ENCODE measurements at regions of chr19 and their contacts with region 1.

Region 1: GRCh38 chr19:18152444-18152816 is 533 bp upstream of the PIK3R2 start:
- DNase-seq: peak; percentile 100
- ATAC-seq: peak; percentile 79
- H3K4me3 Mint-ChIP-seq: peak overlapping the region; percentile 84
- H3K27ac Mint-ChIP-seq: peak overlapping the region; percentile 98
- H3K4me1 Mint-ChIP-seq: peaks cover 23% of the 10 kb centered on the region
- H3K27me3 Mint-ChIP-seq: no peaks in the 10 kb centered on the region

Region 2: GRCh38 chr19:17511724-17512573 is 640.5 kb before region 1 on chr19:
- CTCF ChIA-PET with region 1: no interaction called
- POLR2A ChIA-PET with region 1: no interaction called
- intact Hi-C with region 1: loop called in 1 of 2 experiments (anchors 5 kb)
- DNase-seq: peak; percentile 92
- ATAC-seq: peak; percentile 52
- H3K4me3 Mint-ChIP-seq: peak overlapping the region; percentile 95
- H3K27ac Mint-ChIP-seq: peak overlapping the region; percentile 88
- H3K4me1 Mint-ChIP-seq: peaks cover 39% of the 10 kb centered on the region
- H3K27me3 Mint-ChIP-seq: no peaks in the 10 kb centered on the region

Region 3: GRCh38 chr19:18000935-18001778 is 151.3 kb before region 1 on chr19:
- CTCF ChIA-PET with region 1: interaction called, 3 read pairs
- POLR2A ChIA-PET with region 1: interaction called, 3 read pairs
- intact Hi-C with region 1: loop called (anchors 1 to 10 kb)
- DNase-seq: peak; percentile 95
- ATAC-seq: peak; percentile 84
- H3K4me3 Mint-ChIP-seq: peak overlapping the region; percentile 85
- H3K27ac Mint-ChIP-seq: peak overlapping the region; percentile 95
- H3K4me1 Mint-ChIP-seq: peaks cover 25% of the 10 kb centered on the region
- H3K27me3 Mint-ChIP-seq: no peaks in the 10 kb centered on the region

Region 4: GRCh38 chr19:18091217-18091608 is 61.2 kb before region 1 on chr19:
- CTCF ChIA-PET with region 1: no interaction called
- POLR2A ChIA-PET with region 1: no interaction called
- intact Hi-C with region 1: loop called in 1 of 2 experiments (anchors 2 kb)
- DNase-seq: peak; percentile 92
- ATAC-seq: peak; percentile 73
- H3K4me3 Mint-ChIP-seq: peak overlapping the region; percentile 57
- H3K27ac Mint-ChIP-seq: peak overlapping the region; percentile 99
- H3K4me1 Mint-ChIP-seq: peaks cover 63% of the 10 kb centered on the region
- H3K27me3 Mint-ChIP-seq: no peaks in the 10 kb centered on the region

Region 5: DNA sequence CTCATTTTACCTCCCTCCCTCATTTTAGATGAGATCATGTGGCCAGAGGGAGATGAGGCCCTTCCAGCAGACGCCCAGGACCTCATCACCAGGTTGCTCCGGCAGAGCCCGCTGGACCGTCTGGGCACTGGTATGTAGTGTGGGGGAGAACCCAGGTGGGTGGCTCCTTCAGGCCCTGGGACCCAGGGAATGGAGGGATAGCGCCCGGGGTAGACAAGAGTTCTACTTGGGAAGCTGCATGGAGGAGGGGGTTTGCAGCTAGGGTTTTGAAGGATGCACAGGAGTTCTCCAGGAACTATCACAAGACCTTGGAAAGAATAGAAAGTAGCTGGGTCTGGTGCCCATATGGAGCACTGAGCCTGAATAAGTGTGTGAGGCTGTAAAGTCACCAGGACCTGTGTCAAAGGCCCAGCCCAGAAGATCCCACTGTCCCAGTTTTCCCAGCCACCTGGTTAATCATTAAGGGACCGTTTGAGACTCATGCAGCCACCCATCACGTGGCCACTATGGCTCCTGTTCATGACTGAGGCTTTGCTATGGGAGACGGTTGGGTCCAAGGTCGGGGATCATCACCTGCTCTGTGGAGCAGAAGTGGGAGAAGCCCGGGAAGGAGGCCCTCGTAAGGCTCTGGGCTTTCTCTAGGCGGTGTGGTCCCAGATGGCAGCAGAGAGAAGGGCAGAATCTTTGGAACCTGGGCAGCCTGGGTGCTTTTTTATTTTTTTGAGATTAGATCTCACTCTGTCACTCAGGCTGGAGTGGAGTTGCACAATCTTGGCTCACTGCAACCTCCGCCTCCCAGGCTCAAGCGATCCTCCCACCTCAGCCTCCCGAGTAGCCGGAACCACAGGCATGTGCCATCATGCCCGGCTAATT is 16.5 kb before region 1 on chr19:
- CTCF ChIA-PET with region 1: no interaction called
- POLR2A ChIA-PET with region 1: no interaction called
- intact Hi-C with region 1: no loop called
- DNase-seq: no peak
- ATAC-seq: no peak
- H3K4me3 Mint-ChIP-seq: no peak overlapping the region
- H3K27ac Mint-ChIP-seq: no peak overlapping the region
- H3K4me1 Mint-ChIP-seq: no peaks in the 10 kb centered on the region
- H3K27me3 Mint-ChIP-seq: no peaks in the 10 kb centered on the region

Region 6: GRCh38 chr19:18173572-18174288 is 21.3 kb after region 1 on chr19 and contains the start of gene IFI30:
- CTCF ChIA-PET with region 1: no interaction called
- POLR2A ChIA-PET with region 1: interaction called, 3 read pairs
- intact Hi-C with region 1: loop called (anchors 1 to 2 kb)
- DNase-seq: peak; percentile 80
- ATAC-seq: peak; percentile 86
- H3K4me3 Mint-ChIP-seq: peak within 1 kb of the TSS; percentile 80
- H3K27ac Mint-ChIP-seq: peak within 1 kb of the TSS; percentile 65
- H3K4me1 Mint-ChIP-seq: peaks cover 15% of the 10 kb centered on the region
- H3K27me3 Mint-ChIP-seq: no peaks in the 10 kb centered on the region
- total RNA-seq, gene IFI30: 20.4 to 29.5 TPM

Region 7: GRCh38 chr19:18224525-18225354 is 72.3 kb after region 1 on chr19:
- CTCF ChIA-PET with region 1: interaction called, 4 read pairs
- POLR2A ChIA-PET with region 1: no interaction called
- intact Hi-C with region 1: loop called in 1 of 2 experiments (anchors 1 kb)
- DNase-seq: peak; percentile 96
- ATAC-seq: peak; percentile 100
- H3K4me3 Mint-ChIP-seq: peak overlapping the region; percentile 72
- H3K27ac Mint-ChIP-seq: no peak overlapping the region
- H3K4me1 Mint-ChIP-seq: peaks cover 20% of the 10 kb centered on the region
- H3K27me3 Mint-ChIP-seq: peaks cover 51% of the 10 kb centered on the region

Region 8: DNA sequence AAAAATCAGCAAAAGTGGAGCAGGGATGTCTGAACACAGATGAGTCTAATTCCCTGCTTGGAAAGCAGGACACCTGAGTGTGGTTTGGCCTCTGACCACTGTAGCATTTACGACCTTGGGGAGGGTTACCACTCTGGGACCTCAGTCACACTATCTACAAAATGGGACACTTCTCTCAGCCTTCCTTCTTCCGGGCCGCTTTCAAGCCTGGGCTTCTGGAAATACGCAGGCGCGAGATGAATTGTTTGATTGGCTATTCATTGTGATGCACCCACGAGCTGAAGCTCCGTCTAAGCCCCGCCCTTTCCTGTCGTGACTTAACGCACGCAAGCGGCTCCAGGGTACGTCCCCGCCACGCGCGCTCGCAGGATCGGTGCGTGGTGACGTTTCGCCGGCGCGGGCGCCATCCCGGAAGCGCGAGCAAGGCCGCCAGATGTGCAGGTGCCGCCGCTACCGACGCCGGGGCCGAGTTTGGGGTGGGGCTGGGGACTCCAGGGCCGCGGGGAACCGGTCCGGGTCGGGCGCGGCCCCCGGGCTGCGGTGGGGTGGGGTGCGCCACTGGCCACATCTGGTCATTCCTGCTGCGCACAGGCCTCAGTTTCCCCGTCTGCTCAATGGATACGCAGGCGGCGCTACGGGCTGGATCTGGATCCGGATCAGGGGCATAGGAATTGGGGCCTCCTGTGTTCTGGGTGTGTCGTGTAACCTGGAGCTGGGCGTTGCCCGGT is 405.2 kb after region 1 on chr19 and contains the start of gene KXD1:
- CTCF ChIA-PET with region 1: no interaction called
- POLR2A ChIA-PET with region 1: no interaction called
- intact Hi-C with region 1: loop called in 1 of 2 experiments (anchors 1 kb)
- DNase-seq: peak; percentile 99
- ATAC-seq: peak; percentile 99
- H3K4me3 Mint-ChIP-seq: peak within 1 kb of the TSS; percentile 91
- H3K27ac Mint-ChIP-seq: peak within 1 kb of the TSS; percentile 95
- H3K4me1 Mint-ChIP-seq: peaks cover 20% of the 10 kb centered on the region
- H3K27me3 Mint-ChIP-seq: no peaks in the 10 kb centered on the region
- total RNA-seq, gene KXD1: 121 to 170 TPM